Activated CD4-positive, alpha-beta memory T cell treated with anti-CD3 and anti-CD28 coated beads for 36 hours (primary cell): ENCODE measurements at regions of chr3 and their contacts with region 1.

Region 1: DNA sequence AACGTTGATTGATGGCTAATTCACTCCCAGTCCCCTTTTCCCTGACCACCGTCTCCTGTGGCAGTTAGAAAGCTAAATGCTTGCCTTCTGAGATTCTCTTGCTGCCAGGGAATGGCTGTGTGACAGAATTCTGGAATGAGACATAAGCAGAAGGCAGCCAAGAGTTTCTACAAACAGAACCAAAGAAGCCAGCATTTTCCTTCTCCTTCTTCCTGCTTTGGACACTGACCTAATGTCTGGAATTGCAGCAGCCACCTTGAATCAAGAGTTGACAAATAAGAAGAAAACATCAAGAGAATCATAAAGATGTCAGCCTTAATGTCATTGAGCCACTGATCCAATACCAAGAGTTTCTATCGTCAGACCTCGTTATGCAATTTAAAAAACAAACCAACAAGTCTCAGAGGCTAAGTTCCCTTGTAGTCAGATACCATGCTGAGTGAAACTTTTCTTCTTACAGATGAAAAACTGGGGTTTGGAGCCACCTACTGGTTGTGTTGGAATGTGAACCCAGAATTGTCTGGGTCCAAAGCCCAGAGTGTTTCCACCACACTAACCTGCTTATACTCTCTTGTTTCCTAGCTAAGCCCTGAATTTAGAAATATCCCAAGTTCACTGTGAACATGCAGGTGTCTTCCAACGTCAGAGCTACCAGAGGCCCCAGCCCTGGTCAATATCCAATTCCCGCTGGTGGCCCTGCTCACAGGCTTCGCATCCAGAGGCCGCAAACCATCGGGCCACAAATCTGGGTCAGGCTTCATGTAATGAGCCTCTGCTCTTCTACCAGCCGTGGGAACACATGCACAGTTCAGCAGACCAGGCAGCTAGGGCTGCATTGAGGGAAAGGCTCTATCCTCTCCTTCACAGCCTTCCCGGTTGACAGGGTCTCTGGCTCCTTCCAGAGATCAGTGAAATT is 42.5 kb downstream of the MCF2L2 start:
- DNase-seq: peak; percentile 61
- H3K4me3 Mint-ChIP-seq: no peak overlapping the region
- H3K27ac Mint-ChIP-seq: no peak overlapping the region
- H3K4me1 Mint-ChIP-seq: peaks cover 6% of the 10 kb centered on the region
- H3K27me3 Mint-ChIP-seq: no peaks in the 10 kb centered on the region

Region 2: DNA sequence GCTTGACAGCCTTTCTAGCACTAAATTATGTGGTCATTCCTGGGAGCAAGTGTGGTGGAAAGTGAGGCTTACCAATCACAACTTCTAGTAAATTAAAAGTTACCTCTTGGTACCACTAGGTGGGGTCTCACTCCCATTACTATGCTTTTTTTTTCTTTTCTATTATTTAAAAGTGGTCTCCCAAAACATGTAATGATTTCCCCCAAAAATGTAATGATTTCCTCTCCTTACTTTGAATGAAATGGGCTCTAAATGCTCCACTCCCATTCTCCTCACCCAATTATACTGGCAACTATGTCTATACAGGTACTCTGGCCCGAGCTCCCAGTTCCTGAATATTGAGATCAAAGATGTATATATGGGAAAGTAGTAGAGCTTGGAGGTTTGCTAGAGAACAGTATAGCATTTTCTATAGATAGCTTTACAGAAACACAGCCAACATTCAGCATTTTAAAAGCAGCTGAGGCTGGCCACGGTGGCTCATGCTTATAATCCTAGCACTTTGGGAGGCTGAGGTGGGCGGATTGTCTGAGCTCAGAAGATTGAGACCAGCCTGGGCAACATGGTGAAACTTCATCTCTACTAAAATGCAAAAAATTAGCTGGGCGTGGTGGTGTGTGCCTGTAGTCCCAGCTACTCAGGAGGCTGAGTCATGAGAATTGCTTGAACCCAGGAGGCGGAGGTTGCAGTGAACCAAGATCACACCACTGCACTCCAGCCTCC is 476.5 kb before region 1 on chr3:
- CTCF ChIA-PET with region 1: no interaction called
- POLR2A ChIA-PET with region 1: no interaction called
- intact Hi-C with region 1: loop called (anchors 10 kb)
- DNase-seq: peak; percentile 16
- H3K4me3 Mint-ChIP-seq: no peak overlapping the region
- H3K27ac Mint-ChIP-seq: no peak overlapping the region
- H3K4me1 Mint-ChIP-seq: peaks cover 44% of the 10 kb centered on the region
- H3K27me3 Mint-ChIP-seq: no peaks in the 10 kb centered on the region

Region 3: GRCh38 chr3:183158551-183159006 is 227.4 kb before region 1 on chr3:
- CTCF ChIA-PET with region 1: interaction called, 10 read pairs
- POLR2A ChIA-PET with region 1: no interaction called
- intact Hi-C with region 1: no loop called
- DNase-seq: peak; percentile 67
- H3K4me3 Mint-ChIP-seq: no peak overlapping the region
- H3K27ac Mint-ChIP-seq: peak overlapping the region; percentile 26
- H3K4me1 Mint-ChIP-seq: peaks cover 27% of the 10 kb centered on the region
- H3K27me3 Mint-ChIP-seq: peaks cover 3% of the 10 kb centered on the region

Region 4: DNA sequence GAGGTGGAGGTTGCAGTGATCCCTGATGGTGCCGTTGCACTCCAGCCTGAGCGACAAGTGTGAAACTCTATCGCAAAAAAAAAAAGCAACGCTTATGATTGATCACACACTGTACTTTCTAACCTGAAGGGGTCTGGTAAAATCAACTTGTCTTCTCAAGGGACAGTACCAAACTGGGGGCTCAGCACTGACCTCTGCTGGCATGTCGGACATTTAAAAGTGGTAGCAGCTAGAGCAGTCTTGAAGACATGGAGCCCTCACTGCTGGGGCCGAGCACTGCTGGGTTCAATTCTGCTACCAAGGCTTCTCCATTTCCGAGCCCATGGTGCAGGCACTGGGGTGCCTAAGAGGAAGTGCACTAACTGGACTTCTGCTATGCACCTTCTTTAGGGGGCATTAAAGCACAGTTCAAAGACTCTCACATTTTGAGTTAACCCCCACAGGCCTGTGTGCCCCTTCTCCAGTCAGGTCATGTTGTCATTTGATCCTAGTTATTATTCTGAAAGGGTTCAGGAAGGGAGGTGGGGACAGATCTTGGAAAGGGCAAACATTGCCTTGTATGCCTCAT is 197.0 kb before region 1 on chr3:
- CTCF ChIA-PET with region 1: interaction called, 275 read pairs
- POLR2A ChIA-PET with region 1: interaction called, 3 read pairs
- intact Hi-C with region 1: loop called (anchors 1 kb)
- DNase-seq: peak; percentile 55
- H3K4me3 Mint-ChIP-seq: no peak overlapping the region
- H3K27ac Mint-ChIP-seq: no peak overlapping the region
- H3K4me1 Mint-ChIP-seq: peaks cover 10% of the 10 kb centered on the region
- H3K27me3 Mint-ChIP-seq: no peaks in the 10 kb centered on the region

Region 5: DNA sequence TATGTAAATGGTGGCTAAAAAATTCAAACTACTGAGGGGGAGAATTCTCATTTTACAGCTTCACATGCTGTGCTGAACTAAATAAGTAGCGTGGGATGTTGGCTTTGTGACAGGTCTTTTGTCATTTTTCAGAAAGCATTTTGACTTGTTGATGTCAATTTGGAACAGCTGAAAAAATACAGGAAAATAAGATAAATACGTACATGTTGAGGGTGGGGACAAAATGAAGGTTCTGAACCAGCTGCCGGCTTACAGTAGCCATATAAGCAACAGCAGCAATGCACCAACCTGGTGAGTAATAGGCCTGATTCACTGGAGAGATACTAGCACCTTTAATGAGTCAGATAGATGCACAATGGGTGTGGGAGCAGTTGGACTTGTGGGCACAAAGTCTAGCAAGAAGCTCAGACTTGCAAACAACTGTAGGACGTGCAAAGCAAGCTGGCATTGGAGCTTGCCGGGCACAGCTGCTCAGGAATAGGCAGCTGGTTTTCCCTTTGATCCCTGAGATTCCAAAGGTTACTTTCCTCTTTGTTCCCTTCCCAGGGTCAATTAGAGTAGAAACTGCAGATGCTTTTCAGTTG is 120.0 kb before region 1 on chr3:
- CTCF ChIA-PET with region 1: interaction called, 11 read pairs
- POLR2A ChIA-PET with region 1: no interaction called
- intact Hi-C with region 1: no loop called
- DNase-seq: peak; percentile 71
- H3K4me3 Mint-ChIP-seq: peak overlapping the region; percentile 25
- H3K27ac Mint-ChIP-seq: no peak overlapping the region
- H3K4me1 Mint-ChIP-seq: peaks cover 1% of the 10 kb centered on the region
- H3K27me3 Mint-ChIP-seq: no peaks in the 10 kb centered on the region

Region 6: GRCh38 chr3:183375787-183376186 is 10.2 kb before region 1 on chr3:
- CTCF ChIA-PET with region 1: interaction called, 26 read pairs
- POLR2A ChIA-PET with region 1: no interaction called
- intact Hi-C with region 1: loop called (anchors 1 kb)
- DNase-seq: no peak
- H3K4me3 Mint-ChIP-seq: no peak overlapping the region
- H3K27ac Mint-ChIP-seq: no peak overlapping the region
- H3K4me1 Mint-ChIP-seq: peaks cover 28% of the 10 kb centered on the region
- H3K27me3 Mint-ChIP-seq: no peaks in the 10 kb centered on the region